ENCODE measurements at regions of chr21 and their contacts with region 1.

Region 1: DNA sequence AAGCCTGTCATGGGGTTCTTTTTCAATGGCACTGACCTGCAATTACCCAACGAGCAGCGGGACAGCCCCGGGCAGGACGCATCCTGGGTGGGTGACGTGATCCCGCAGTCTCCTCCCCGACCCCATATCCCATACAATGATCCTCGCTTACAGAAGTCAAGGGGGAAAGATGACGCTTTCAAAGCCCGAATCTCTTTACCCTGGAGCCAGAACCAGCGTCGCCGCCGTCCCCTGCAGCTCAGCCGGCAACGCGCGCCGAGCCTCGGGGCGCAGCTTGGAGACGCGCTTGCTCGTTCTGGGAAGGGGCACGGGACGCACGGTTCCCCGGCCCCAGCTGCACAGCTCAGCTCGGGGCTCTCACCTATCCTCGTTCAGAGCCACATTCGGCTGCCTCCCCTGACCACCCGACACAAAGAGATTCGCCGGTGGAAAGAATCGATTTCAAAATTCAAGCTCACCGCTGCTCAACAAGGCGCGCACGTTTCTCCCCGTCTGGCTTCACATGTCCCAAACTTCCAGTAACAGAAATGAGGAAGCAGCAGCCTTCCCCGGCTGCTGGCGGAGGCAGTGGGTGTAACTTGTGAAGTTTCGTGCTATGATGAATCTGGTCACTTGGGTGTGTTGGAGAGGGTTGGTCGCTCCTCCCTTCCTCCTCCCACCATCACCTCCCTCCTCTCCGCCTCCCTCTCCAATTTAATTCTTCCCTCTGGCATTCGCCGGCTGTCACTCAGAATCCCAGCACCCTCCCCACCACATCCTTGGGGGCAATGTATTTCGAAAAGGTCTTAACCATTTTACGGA is at the start of gene TIAM1:
- DNase-seq: peak; percentile 58
- H3K4me3 Mint-ChIP-seq: peak within 1 kb of the TSS; percentile 91
- H3K27ac Mint-ChIP-seq: peak within 1 kb of the TSS; percentile 88
- H3K4me1 Mint-ChIP-seq: peaks cover 58% of the 10 kb centered on the region
- H3K27me3 Mint-ChIP-seq: no peaks in the 10 kb centered on the region
- total RNA-seq, gene TIAM1: 50.1 to 51.0 TPM

Region 2: GRCh38 chr21:30718239-30718909 is 625.5 kb before region 1 on chr21 and contains the start of gene KRTAP21-3:
- CTCF ChIA-PET with region 1: no interaction called
- intact Hi-C with region 1: loop called (anchors 5 kb)
- DNase-seq: peak; percentile 33
- H3K4me3 Mint-ChIP-seq: no peak within 1 kb of the TSS
- H3K27ac Mint-ChIP-seq: peak within 1 kb of the TSS; percentile 46
- H3K4me1 Mint-ChIP-seq: peaks cover 21% of the 10 kb centered on the region
- H3K27me3 Mint-ChIP-seq: peaks cover 2% of the 10 kb centered on the region
- total RNA-seq, gene KRTAP21-3: not detected

Region 3: GRCh38 chr21:31198575-31198974 is 145.3 kb before region 1 on chr21:
- CTCF ChIA-PET with region 1: interaction called, 8 read pairs
- intact Hi-C with region 1: loop called (anchors 1 kb)
- DNase-seq: no peak
- H3K4me3 Mint-ChIP-seq: no peak overlapping the region
- H3K27ac Mint-ChIP-seq: no peak overlapping the region
- H3K4me1 Mint-ChIP-seq: peaks cover 51% of the 10 kb centered on the region
- H3K27me3 Mint-ChIP-seq: no peaks in the 10 kb centered on the region

Region 4: DNA sequence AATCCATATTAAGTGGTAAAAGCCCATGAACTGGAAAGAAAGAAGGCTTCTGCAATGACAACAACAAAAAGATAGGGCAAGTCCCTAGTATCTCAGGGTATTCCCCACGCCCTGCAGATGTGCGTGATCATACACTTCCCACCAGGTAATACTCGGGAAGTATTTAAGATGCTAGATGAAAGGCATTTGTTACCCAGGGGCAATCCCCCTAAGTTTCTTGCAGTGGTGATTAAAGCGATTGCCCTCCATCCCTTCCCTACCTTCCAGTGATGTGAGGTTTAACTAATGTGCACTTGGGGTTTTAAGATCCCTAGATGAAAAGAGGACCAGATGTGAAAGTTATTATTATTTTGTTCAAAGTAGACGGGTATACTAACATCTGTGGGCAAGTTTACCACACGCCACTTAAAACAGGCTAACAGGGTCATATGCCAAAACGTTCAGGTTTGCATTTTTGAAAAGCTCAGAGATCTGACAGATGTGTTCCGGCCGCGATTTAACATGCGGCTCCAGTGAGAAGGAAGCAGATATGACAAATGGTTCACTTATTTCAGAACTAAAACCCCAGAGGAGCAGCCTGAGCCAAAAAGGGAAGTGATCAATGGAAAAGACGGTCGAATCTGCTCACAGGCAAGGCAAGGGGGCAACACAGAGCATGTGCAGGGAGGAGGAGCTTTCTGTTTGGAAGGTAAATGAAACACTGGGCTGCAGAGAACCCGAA is 17.2 kb before region 1 on chr21:
- CTCF ChIA-PET with region 1: interaction called, 4 read pairs
- intact Hi-C with region 1: loop called (anchors 1 kb)
- DNase-seq: peak; percentile 83
- H3K4me3 Mint-ChIP-seq: peak overlapping the region; percentile 45
- H3K27ac Mint-ChIP-seq: peak overlapping the region; percentile 92
- H3K4me1 Mint-ChIP-seq: peaks cover 37% of the 10 kb centered on the region
- H3K27me3 Mint-ChIP-seq: no peaks in the 10 kb centered on the region

Region 5: DNA sequence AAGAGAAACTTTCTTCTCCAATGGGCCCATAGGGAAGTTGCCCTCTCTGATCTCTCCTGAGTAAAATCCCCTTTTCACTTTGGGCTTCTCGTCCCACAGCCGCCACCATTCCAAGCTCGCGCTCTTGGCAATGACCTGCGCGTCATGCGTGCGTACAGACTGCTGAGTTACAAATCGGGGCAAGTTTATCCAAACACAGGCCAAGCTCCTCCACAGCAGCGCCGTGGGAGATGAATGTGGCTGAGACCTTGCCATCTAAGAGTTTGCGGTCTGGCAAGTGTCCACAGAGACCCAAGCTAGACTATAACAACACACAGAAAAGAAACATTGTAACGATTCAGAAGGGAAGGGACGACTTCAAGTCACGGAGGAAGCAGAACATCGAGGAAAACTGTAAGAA is 199.3 kb after region 1 on chr21:
- CTCF ChIA-PET with region 1: no interaction called
- intact Hi-C with region 1: no loop called
- DNase-seq: no peak
- H3K4me3 Mint-ChIP-seq: no peak overlapping the region
- H3K27ac Mint-ChIP-seq: no peak overlapping the region
- H3K4me1 Mint-ChIP-seq: no peaks in the 10 kb centered on the region
- H3K27me3 Mint-ChIP-seq: no peaks in the 10 kb centered on the region

Region 6: DNA sequence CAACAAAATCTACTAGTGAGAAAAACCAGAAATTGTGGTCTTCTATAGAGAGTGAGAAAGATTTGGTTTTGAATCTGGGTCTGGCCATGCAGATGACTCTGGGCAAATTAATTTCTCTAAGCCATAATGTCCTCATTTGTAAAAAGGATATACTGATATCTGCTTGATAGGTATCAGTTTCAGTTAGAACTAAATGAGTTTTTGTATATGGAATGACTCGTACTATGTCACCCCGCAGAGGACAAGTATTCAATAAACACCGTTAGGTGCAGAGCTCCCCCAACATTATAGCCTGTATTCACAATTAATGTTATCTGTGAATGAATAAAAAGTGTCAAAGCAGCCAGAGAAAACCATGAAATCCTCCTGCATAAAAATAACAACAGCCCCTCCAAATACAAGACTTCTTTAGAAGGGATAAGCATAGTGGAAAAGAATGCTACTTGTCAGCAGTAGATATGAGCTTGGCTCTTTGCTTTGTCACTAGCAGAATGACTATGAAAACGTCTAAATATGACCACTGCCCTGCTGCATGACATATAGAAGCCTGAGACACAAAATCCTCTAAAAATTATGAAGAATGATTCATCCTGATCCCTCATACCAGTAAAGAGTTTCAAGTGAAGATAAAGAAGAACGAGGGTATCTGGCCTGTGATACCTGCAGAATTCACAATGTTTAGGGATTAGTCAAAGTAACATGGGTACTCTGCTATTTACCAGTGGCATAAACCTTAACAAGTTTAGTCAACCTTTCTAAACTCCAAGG is 370.3 kb after region 1 on chr21:
- CTCF ChIA-PET with region 1: no interaction called
- intact Hi-C with region 1: loop called (anchors 5 kb)
- DNase-seq: no peak
- H3K4me3 Mint-ChIP-seq: no peak overlapping the region
- H3K27ac Mint-ChIP-seq: peak overlapping the region; percentile 36
- H3K4me1 Mint-ChIP-seq: peaks cover 83% of the 10 kb centered on the region
- H3K27me3 Mint-ChIP-seq: no peaks in the 10 kb centered on the region

Measured in activated naive CD4-positive, alpha-beta T cell treated with anti-CD3 and anti-CD28 coated beads for 36 hours (primary cell).